Ascending aorta (tissue), 2 donors: ENCODE measurements at regions of chr5 and their contacts with region 1.

Region 1: DNA sequence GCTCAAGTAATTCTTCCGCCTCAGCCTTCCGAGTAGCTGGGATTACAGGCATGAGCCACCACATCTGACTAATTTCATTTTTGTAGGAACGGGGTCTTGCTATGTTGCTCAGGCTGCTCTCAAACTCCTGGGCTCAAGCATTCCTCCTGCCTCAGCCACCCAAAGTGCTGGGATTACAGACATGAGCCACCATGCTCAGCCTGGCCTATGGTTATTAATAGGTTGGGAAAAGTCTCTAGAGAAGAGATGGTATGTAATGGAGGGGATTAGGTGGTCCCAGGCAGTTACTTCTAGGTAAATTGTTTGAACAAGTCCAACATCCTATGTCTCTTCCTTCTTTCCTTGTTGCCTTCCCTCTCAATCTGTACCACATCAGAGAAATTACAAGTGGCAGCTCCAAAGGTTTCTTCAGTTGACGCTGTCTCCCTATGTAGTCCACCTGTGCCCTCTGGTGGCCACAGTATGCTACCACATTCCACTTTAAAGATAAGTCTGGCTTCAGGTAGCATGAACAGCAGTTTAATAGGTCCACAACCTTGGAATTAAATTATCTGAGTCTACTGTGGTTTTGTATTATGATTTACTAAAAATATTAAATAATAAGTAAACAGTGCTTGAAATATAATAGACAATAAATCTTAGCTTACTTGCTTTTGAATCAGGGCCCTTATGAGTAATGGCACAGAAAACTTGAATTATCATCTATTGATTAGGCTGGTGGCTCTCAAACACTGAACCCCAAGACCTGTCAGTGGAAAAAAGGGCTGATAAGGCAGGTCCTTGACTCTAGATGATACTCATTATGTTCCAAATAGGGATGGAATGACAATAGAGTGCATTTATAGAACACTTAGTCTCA is 9.7 kb downstream of the TIGD6 start:
- DNase-seq: peak in 1 of 2 donors; percentile 88
- H3K4me3 ChIP-seq: no peak overlapping the region
- H3K27ac ChIP-seq: no peak overlapping the region
- H3K4me1 ChIP-seq: peaks cover 2 to 10% of the 10 kb centered on the region in 2 donors
- H3K27me3 ChIP-seq: no peaks in the 10 kb centered on the region
- CTCF ChIP-seq: peak; percentile 88 to 96 (median 93)

Region 2: GRCh38 chr5:149540089-149540488 is 450.7 kb before region 1 on chr5:
- intact Hi-C with region 1: no loop called
- DNase-seq: no peak
- H3K4me3 ChIP-seq: no peak overlapping the region
- H3K27ac ChIP-seq: peak overlapping the region in 1 of 2 donors; percentile 5
- H3K4me1 ChIP-seq: peaks cover 6 to 63% of the 10 kb centered on the region in 2 donors
- H3K27me3 ChIP-seq: no peaks in the 10 kb centered on the region
- CTCF ChIP-seq: no peak

Region 3: GRCh38 chr5:149636851-149637246 is 353.9 kb before region 1 on chr5:
- intact Hi-C with region 1: loop called (anchors 5 kb)
- DNase-seq: no peak
- H3K4me3 ChIP-seq: no peak overlapping the region
- H3K27ac ChIP-seq: no peak overlapping the region
- H3K4me1 ChIP-seq: no peaks in the 10 kb centered on the region
- H3K27me3 ChIP-seq: no peaks in the 10 kb centered on the region
- CTCF ChIP-seq: peak; percentile 55 to 73 (median 72)

Region 4: GRCh38 chr5:149697001-149697400 is 293.7 kb before region 1 on chr5:
- intact Hi-C with region 1: no loop called
- DNase-seq: no peak
- H3K4me3 ChIP-seq: no peak overlapping the region
- H3K27ac ChIP-seq: no peak overlapping the region
- H3K4me1 ChIP-seq: no peaks in the 10 kb centered on the region
- H3K27me3 ChIP-seq: no peaks in the 10 kb centered on the region
- CTCF ChIP-seq: no peak

Region 5: GRCh38 chr5:149731639-149732323 is 259.0 kb before region 1 on chr5:
- intact Hi-C with region 1: no loop called
- DNase-seq: peak; percentile 35 to 88
- H3K4me3 ChIP-seq: peak overlapping the region; percentile 72 to 90
- H3K27ac ChIP-seq: no peak overlapping the region
- H3K4me1 ChIP-seq: peaks cover 0 to 5% of the 10 kb centered on the region in 2 donors
- H3K27me3 ChIP-seq: no peaks in the 10 kb centered on the region
- CTCF ChIP-seq: no peak

Region 6: GRCh38 chr5:149834246-149834855 is 156.4 kb before region 1 on chr5:
- intact Hi-C with region 1: loop called (anchors 1 kb)
- DNase-seq: peak in 1 of 2 donors; percentile 79
- H3K4me3 ChIP-seq: no peak overlapping the region
- H3K27ac ChIP-seq: no peak overlapping the region
- H3K4me1 ChIP-seq: no peaks in the 10 kb centered on the region
- H3K27me3 ChIP-seq: no peaks in the 10 kb centered on the region
- CTCF ChIP-seq: peak; percentile 61 to 74 (median 73)